Activated CD4-positive, alpha-beta memory T cell treated with anti-CD3 and anti-CD28 coated beads, Interleukin-2, amount 10 ng/mL, durations not matched to agents 7 days and 5 days (primary cell): ENCODE measurements at regions of chr4 and their contacts with region 1.

Region 1: GRCh38 chr4:183261953-183262775 is 57.9 kb downstream of the CLDN22 start:
- DNase-seq: peak; percentile 80
- H3K4me3 Mint-ChIP-seq: no peak overlapping the region
- H3K27ac Mint-ChIP-seq: peak overlapping the region; percentile 48
- H3K4me1 Mint-ChIP-seq: peaks cover 6% of the 10 kb centered on the region
- H3K27me3 Mint-ChIP-seq: peaks cover 2% of the 10 kb centered on the region

Region 2: DNA sequence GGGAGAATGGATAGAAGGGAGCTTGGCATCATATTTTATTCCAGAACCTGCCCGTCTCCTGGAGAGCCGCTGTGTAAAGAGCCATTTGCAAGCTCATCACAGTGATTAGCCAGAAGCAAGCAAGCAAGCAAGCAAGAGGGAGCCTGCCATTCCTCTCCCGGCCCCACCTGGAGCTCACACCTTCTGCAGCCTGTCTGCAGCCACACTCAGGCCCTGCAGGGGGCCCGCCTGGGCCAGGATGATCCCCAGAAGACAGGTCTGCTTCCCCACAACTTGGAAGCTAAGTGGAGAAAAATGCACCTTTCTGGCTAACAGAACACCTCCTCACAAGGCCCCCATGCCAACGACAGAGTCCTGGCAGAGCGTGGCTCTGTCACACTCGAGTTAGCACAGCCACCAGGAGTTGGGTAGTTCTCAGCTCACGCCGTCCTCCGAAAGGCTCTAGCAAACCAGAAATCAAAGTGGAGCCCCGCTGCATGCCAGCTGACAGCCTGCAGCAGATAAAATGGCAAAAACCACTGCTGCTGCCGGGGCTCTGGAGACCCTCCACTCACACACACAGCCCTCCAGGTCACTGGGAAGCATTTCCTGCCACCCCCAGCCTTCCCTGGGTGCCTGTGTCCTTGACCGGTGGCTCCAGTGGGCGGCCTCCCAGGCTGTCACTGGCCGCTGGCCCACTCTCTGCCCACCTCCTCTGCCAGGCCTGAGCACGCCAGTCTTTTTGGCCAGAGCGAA is 399.9 kb before region 1 on chr4:
- CTCF ChIA-PET with region 1: no interaction called
- POLR2A ChIA-PET with region 1: no interaction called
- DNase-seq: no peak
- H3K4me3 Mint-ChIP-seq: no peak overlapping the region
- H3K27ac Mint-ChIP-seq: no peak overlapping the region
- H3K4me1 Mint-ChIP-seq: peaks cover 1% of the 10 kb centered on the region
- H3K27me3 Mint-ChIP-seq: peaks cover 2% of the 10 kb centered on the region

Region 3: GRCh38 chr4:183249857-183250256 is 12.3 kb before region 1 on chr4:
- CTCF ChIA-PET with region 1: interaction called, 22 read pairs
- POLR2A ChIA-PET with region 1: interaction called, 4 read pairs
- DNase-seq: no peak
- H3K4me3 Mint-ChIP-seq: no peak overlapping the region
- H3K27ac Mint-ChIP-seq: no peak overlapping the region
- H3K4me1 Mint-ChIP-seq: no peaks in the 10 kb centered on the region
- H3K27me3 Mint-ChIP-seq: no peaks in the 10 kb centered on the region